ENCODE measurements at regions of chr13 and their contacts with region 1.

Region 1: DNA sequence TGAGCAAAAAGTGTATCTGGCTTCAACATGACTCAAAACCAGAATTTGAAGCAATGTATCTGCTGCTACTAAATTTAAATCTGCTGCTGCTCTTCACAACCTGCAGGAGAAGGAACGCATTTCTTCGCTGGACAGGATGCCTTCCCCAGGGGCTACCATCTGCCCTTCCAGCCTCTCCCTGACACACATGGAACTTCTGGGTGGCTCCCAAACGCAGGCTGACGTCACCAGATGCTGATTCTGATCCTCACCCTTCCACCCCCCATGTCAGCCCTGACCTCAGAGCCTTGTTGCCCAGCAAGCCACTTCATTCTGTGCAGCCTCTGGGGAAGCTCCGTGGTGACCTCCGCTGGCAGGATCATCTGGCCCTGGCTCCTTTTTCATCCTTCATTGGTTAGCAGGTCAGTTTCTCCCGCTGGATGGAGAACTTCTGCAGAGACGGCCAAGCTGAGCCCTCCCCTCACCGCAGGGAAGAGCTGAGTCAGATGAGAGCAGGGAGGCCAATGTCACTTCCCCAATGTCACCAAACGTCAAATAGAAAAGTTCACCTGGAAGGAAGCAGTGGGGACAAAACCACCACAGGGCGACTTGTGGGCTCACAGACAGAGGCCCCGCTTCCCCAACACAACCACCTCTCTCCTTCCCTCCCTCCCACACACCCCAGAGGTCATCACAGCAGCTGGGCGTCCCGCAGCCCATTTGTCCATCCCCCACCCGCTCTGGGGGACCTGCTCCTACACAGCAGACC is 14.0 kb upstream of the RAB20 start:
- DNase-seq: no peak
- ATAC-seq: peak; percentile 80
- H3K4me3 Mint-ChIP-seq: no peak overlapping the region
- H3K27ac Mint-ChIP-seq: peak overlapping the region; percentile 4; the same call in 1 of the 2 replicates
- H3K4me1 Mint-ChIP-seq: peaks cover 14% of the 10 kb centered on the region
- H3K27me3 Mint-ChIP-seq: no peaks in the 10 kb centered on the region; the same call in 1 of the 2 replicates
- CTCF ChIP-seq: no peak

Region 2: DNA sequence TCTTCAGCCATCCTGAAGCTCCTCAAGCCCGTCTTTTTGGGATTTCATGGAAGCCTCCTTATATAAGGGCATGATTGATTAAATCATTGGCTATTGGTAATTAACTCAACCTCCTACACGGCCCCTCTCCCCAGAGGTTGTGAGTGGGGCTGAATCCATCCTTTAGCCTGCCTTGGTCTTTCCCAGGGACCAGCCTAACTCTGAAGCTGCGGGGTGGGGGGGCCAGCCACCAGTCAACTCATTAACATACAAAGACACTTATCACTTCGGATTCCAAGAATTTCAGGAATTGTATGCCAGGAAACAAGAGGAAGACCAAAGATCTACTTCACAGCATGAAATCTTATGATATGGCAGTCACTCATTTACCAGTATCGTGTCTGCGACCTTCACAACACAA is 278.5 kb before region 1 on chr13:
- CTCF ChIA-PET with region 1: no interaction called
- POLR2A ChIA-PET with region 1: interaction called, 10 read pairs
- DNase-seq: no peak
- ATAC-seq: no peak
- H3K4me3 Mint-ChIP-seq: no peak overlapping the region
- H3K27ac Mint-ChIP-seq: no peak overlapping the region
- H3K4me1 Mint-ChIP-seq: peaks cover 30% of the 10 kb centered on the region
- H3K27me3 Mint-ChIP-seq: no peaks in the 10 kb centered on the region
- CTCF ChIP-seq: no peak

Region 3: DNA sequence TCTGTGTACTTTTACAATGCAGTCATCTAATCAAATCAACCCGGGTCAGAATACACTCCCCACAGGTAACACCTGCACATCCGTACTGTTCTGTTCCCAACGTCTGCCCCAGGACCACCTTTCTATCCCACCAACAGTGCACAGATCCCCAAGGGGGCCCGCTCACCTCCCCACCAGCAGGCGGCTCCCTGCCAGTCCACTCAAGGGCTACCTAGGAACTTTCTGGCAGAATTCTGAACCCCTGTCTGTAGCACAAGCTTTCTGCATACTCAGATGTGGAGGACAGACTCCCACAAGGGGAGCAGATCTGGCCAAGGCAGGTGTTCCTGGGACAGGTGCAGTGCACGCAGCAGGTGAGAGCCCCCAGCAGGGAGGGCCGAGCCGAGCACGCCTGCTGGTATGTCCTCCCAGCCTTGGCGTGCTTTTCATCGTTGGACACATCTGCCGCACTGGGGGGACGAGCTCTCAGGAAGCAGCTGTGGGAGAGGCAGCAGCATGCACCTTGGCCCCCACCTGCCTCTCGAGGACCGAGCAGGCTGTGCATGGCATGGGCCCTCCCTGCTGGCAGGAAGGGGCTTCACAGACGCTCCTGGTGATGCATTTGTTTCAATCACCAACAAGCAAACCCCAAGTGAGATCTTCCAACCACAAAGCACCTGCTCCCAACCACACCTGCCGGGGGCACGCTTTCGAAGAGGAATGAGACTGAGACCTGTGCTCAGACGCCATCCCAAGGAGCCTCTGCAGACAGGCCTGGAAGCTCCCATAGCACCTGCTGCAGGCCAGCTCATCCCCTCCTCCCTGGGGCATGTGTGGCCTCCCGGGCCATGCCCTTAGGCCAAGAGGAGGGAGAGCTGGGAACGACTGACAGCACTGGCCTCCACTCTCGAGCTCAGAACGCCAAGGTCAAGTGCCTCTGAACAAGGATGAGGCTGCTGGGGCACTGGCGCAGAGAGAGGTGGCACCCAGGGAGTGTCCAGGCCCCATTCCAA is 49.9 kb before region 1 on chr13:
- CTCF ChIA-PET with region 1: no interaction called
- POLR2A ChIA-PET with region 1: no interaction called
- DNase-seq: no peak
- ATAC-seq: no peak; the same call in 1 of the 2 replicates
- H3K4me3 Mint-ChIP-seq: no peak overlapping the region
- H3K27ac Mint-ChIP-seq: peak overlapping the region; percentile 65
- H3K4me1 Mint-ChIP-seq: peaks cover 39% of the 10 kb centered on the region
- H3K27me3 Mint-ChIP-seq: no peaks in the 10 kb centered on the region; the same call in 1 of the 2 replicates
- CTCF ChIP-seq: no peak

Region 4: DNA sequence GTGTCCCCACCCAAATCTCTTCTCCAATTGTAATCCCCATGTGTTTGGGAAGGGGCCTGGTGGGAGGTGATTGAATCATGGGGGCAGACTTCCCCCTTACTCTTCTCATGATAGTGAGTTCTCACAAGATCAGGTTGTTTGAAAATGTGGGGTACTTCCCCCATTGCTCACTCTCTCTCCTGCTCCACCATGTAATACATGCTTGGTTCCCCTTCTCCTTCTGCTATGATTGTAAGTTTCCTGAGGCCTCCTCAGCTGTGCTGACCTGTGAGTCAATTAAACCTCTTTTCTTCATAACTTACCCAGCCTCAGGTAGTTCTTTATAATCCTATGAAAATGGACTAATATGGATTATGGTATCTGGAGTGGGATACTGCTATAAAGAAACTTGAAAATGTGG is 162.1 kb after region 1 on chr13:
- CTCF ChIA-PET with region 1: no interaction called
- POLR2A ChIA-PET with region 1: no interaction called
- DNase-seq: no peak
- ATAC-seq: no peak
- H3K4me3 Mint-ChIP-seq: no peak overlapping the region
- H3K27ac Mint-ChIP-seq: no peak overlapping the region
- H3K4me1 Mint-ChIP-seq: no peaks in the 10 kb centered on the region
- H3K27me3 Mint-ChIP-seq: no peaks in the 10 kb centered on the region; the same call in 1 of the 2 replicates
- CTCF ChIP-seq: no peak